ENCODE measurements at regions of chr1 and their contacts with region 1.

Region 1: GRCh38 chr1:201719812-201720521 is 109.0 kb upstream of the IPO9 start:
- DNase-seq: no peak
- H3K4me3 ChIP-seq: no peak overlapping the region
- H3K27ac ChIP-seq: 0 out of 2 replicates have a peak overlapping the region, but pooled peaks have one; percentile 1
- H3K4me1 ChIP-seq: peaks cover 0 to 12% (median 6%) of the 10 kb centered on the region in 4 experiments; a peak in 6 of 7 replicates
- H3K27me3 ChIP-seq: no peaks in the 10 kb centered on the region
- CTCF ChIP-seq: no peak
- EP300 ChIP-seq: no peak
- POLR2A ChIP-seq: no peak
- RAD21 ChIP-seq: no peak

Region 2: DNA sequence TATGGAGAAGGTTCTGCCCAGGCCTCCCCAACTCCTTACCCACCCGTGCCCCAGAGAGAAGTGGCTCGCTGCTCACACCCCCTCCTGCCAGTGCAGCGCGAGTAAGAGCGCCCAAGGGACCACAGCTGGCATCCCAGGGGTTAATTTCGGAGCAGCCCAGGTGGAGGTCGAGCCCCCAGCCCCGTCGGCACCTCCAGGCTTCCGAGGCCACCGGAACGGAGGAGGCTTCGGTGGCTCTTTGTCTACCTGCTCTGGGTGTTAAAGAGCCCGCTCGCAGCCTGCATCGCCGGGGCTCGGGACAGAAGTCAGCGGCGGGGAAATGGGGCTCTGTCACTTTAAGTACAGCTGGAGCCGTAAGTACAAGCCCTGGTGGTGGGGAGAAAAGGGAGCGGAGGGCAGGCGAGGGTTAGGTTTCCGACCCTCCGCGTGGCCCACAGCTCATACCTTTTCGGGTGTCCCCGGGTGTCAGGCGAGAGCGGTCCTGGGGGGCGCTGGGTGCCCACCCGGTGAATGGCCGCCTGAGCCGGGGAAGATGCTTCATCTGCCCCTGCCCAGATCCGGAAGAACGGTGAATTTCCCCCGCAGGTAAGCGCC is 19.6 kb after region 1 on chr1:
- CTCF ChIA-PET with region 1: interaction called, 216 read pairs
- POLR2A ChIA-PET with region 1: interaction called, 10 read pairs
- DNase-seq: peak in 1 of 2 experiments; percentile 77
- H3K4me3 ChIP-seq: peak overlapping the region; percentile 70 to 86 (median 84)
- H3K27ac ChIP-seq: no peak overlapping the region
- H3K4me1 ChIP-seq: peaks cover 37 to 49% (median 44%) of the 10 kb centered on the region in 4 experiments
- H3K27me3 ChIP-seq: no peaks in the 10 kb centered on the region
- CTCF ChIP-seq: no peak
- EP300 ChIP-seq: no peak
- POLR2A ChIP-seq: no peak
- RAD21 ChIP-seq: no peak; a peak in 1 of 4 replicates

Region 3: DNA sequence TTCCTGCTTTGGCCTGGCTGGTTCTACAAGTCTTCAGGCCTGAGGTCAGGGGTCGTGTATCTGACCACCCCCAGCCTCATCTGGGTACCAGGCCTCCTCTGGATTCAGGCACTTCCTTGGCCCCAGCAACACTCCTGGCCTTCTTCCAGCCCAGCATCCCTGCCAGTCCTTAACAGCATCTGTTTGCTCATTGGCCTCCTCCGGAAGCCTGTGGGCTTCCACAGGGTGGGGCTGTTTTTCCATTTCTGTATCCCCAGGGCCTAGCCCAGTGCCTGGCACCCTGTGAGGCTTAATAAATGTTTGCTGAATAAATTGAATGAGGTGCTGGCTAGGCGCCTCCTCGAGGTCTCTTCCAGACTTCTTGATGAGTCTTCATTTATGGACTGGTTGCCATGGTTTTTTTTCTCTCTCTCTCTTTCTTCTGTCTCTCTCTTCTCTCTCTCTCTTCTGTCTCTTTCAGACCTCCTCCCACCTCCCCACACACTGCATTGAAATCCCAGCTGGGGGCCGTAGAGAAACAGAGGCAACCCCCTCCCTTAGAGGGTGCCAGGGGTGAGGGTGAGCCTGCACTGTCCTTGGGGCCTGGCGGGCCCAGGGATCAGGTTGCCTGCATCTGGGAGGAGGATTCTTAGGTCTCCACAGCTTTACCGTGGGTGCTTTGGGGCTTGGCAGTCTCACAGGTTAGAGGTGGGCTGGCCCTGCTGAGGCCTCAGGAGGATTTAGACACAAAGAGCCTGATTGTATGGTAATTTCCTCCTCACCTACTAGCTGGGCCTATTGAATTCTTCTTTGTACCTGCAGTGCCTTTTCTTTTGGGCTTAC is 381.4 kb after region 1 on chr1:
- CTCF ChIA-PET with region 1: no interaction called
- POLR2A ChIA-PET with region 1: no interaction called
- DNase-seq: no peak
- H3K4me3 ChIP-seq: no peak overlapping the region
- H3K27ac ChIP-seq: no peak overlapping the region
- H3K4me1 ChIP-seq: peaks cover 14 to 17% (median 16%) of the 10 kb centered on the region in 4 experiments
- H3K27me3 ChIP-seq: no peaks in the 10 kb centered on the region
- CTCF ChIP-seq: 0 out of 4 replicates have a peak, but pooled peaks of 1 of the 3 experiments have one; percentile 16
- EP300 ChIP-seq: no peak
- POLR2A ChIP-seq: no peak
- RAD21 ChIP-seq: no peak; a peak in 2 of 4 replicates

Measured in H1 (cell line).